ENCODE measurements at regions of chr2 and their contacts with region 1.

Region 1: GRCh38 chr2:109176928-109177327 is 47.9 kb downstream of the SH3RF3 start:
- DNase-seq: peak in 1 of 2 donors; percentile 31
- H3K4me3 ChIP-seq: no peak overlapping the region
- CTCF ChIP-seq: no peak
- POLR2A ChIP-seq: no peak

Region 2: DNA sequence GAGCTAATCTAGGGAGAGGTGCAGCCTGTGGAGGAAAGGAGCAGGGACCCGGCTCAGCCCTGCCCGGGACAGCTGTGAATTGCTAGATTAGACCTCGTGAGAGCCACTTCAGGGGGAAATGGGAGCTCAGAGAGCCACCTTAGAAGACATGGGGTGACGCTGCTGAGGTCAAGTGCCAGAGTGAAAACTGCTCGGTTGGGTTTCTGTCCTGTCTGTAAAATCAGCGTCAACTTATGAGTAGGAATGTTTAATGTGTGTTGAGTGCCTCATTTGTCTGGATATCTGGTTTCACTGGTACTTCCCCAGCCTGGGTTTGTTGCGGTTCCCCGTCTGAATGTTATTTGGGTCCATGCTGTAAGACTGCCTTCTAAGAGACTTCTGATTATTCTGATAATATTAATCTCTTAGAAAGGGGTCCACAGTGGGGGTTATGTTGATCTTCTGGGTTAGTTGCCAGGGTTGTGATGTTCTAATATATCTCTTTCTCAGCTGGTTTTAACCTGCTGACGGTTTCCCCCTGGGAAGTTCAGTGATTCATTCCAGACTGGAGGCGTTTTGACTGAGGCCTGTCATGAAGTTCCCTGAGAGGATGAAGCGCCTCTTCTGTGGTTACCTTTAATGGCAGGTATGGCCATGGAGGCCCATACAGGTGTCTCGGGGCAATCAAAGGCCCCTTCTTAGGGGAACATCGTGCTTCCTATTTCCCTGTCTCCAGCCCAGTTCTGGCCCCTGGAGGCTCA is 128.0 kb after region 1 on chr2:
- intact Hi-C with region 1: no loop called
- DNase-seq: no peak
- H3K4me3 ChIP-seq: no peak overlapping the region
- CTCF ChIP-seq: no peak
- POLR2A ChIP-seq: no peak

Region 3: DNA sequence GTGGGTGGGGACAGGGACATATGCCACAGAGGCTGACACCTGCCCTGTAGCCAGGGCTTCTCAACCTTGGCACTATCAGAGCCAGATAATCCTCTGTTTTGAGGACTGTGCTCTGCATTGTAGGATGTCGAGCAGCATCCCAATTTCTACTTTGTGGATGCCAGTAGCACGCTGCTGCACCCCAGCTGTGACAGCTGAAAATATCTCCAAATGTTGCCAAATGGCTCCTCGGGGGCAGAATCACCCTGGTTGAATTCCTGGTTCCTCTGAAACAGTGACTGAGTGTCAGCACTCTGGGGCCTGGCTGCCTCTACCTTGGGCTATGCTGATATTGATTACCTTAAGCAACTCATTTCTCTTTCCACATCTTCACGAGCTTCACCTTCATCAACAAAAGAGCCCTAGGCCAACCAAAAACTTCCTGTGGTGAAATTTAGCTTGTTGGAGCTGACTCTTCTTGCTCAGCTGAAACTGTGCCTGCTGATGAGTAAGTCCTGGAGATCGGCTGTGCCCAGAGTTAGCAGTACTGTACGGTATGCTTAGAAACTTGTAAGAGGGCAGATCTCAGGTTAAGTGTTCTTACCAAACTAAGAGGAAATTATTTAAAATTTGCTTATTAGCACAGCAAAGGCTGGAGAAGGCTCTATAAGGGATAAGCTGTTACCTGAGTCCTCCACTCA is 298.7 kb after region 1 on chr2:
- intact Hi-C with region 1: no loop called
- DNase-seq: no peak
- H3K4me3 ChIP-seq: no peak overlapping the region
- CTCF ChIP-seq: no peak
- POLR2A ChIP-seq: no peak

Region 4: DNA sequence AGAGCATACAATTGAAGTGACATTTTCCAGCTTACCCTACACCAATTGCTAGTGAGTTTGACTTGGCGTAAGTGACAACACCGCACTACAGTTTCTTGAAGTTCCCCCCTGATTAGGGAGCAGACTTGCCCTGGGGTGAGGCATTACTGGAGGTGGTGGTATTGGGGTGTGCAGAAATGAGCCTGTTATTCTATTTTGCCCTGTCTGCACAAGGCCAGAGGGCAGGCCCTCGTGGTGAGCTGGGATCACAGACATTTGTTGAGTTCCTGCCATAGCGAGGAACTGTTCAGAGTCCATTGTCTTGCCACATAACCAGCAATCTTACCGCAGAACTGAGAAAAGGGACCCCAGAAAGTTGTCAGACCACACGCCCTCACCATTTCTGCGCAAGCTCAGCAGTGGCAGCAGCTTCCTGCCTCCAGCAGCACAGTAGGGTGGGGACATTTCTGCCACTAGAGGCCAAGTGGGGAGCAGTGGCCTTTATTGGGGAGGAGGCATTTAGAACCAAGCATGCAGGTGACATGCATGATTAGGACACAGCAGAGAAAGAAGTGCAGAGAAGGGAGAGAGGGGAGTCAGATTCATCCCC is 1840.2 kb after region 1 on chr2:
- intact Hi-C with region 1: loop called (anchors 5 kb)
- DNase-seq: no peak
- H3K4me3 ChIP-seq: no peak overlapping the region
- CTCF ChIP-seq: no peak
- POLR2A ChIP-seq: no peak

Measured in lower leg skin (tissue), 4 donors.